Posterior vena cava (tissue), 2 donors: ENCODE measurements at regions of chr3 and their contacts with region 1.

Region 1: DNA sequence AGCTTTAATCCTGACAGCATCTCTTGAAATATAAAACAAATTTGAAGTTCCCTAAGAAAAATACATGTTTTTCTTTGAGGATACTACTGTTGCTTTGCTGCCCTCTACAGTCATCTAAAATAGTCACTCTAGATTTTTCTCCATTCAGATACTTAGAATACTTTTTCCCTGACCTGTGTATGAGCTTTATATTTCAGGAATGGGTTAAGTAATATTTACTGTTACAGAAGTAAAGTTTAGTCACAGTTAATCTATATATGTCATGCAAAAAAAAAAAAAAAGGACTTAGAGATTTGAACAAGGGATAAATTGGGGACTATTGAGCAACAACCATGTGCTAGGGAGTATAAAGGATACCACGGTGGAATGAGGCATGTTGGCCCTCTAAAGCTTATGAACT is 8.8 kb downstream of the NECTIN3 start:
- DNase-seq: no peak

Region 2: GRCh38 chr3:111012388-111013248 is 67.8 kb before region 1 on chr3:
- intact Hi-C with region 1: no loop called
- DNase-seq: no peak

Region 3: DNA sequence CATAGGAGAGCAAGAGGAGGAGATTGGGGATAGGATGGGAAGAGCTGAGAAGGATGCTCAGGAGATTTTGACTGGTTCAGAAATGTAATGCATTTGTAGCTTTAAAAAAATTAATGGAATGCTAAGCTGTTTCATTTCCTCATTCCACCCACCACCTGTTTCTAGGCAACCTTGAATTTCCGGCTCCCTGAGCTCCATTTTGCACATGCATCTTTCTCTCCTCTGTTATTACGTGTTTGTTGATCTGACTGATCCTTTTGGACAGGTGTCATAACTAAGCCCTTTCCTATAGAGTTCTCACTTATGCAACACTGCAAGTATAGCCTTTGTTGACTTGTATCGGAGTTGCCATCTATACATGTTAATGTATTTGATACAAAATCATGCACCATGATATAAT is 958.5 kb after region 1 on chr3:
- intact Hi-C with region 1: loop called in 1 of 2 experiments (anchors 10 kb)
- DNase-seq: no peak

Region 4: DNA sequence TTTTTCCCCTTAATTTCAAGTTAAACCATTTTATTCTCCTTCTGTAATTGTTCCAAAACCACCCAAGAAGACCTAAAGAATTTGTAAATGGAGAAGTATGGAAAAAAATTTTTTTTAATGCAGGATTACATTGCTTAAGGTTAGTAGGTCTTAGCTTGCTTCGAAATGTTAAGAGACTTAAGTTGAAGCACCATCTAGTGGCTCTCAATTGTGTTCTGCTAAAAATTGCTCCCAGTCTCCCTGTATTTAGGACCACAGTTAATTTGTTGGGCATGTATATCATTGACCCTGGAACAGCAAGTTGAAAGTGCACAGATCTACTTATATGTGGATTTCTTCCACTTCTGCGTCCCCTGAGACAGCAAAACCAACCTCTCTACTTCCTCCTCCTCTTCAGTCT is 1733.9 kb after region 1 on chr3:
- intact Hi-C with region 1: no loop called
- DNase-seq: no peak